ENCODE measurements at regions of chr13 and their contacts with region 1.

Region 1: GRCh38 chr13:43110036-43110435 is 86.7 kb downstream of the DNAJC15 start:
- DNase-seq: no peak
- H3K4me3 ChIP-seq: no peak overlapping the region
- H3K27ac ChIP-seq: no peak overlapping the region
- H3K4me1 ChIP-seq: peaks cover 0 to 24% (median 4%) of the 10 kb centered on the region in 4 donors
- H3K27me3 ChIP-seq: no peaks in the 10 kb centered on the region
- CTCF ChIP-seq: no peak
- EP300 ChIP-seq: no peak
- POLR2A ChIP-seq: no peak

Region 2: DNA sequence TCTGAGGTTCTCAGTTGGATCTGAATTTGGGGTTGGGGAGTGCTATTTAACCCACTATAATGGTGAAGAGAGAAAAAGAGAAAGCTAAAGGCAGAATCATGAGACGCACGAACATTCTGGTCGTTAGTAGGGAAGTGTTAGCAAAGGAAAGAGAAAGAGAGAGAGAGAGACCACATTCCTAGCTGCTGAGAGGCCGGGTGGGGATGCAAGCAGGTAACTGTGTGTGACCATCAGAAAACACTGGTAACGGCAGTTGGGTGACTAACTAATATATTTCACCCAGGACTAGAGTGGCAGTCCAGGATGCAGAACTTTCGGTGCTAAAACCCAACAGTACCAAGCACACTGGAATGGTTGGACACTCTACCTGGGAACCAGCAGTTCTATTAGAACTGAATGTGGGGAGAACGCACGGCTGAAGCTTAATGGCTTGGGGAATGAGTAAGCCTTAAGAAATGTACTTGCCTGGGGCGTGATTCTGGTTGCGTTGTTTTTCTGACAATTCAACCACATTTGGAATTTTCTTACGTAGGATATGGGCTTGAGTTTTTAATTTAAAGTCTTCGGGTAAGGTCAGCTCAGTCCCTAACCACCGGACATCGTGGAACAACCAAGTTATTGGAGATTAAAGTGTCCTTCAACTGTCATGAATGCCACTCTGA is 43.5 kb after region 1 on chr13:
- in situ Hi-C with region 1: no loop called
- intact Hi-C with region 1: loop called (anchors 2 kb)
- DNase-seq: no peak
- H3K4me3 ChIP-seq: no peak overlapping the region
- H3K27ac ChIP-seq: no peak overlapping the region
- H3K4me1 ChIP-seq: no peaks in the 10 kb centered on the region
- H3K27me3 ChIP-seq: no peaks in the 10 kb centered on the region
- CTCF ChIP-seq: no peak
- EP300 ChIP-seq: no peak
- POLR2A ChIP-seq: no peak